Activated naive CD4-positive, alpha-beta T cell treated with anti-CD3 and anti-CD28 coated beads for 36 hours (primary cell): ENCODE measurements at regions of chr2 and their contacts with region 1.

Region 1: DNA sequence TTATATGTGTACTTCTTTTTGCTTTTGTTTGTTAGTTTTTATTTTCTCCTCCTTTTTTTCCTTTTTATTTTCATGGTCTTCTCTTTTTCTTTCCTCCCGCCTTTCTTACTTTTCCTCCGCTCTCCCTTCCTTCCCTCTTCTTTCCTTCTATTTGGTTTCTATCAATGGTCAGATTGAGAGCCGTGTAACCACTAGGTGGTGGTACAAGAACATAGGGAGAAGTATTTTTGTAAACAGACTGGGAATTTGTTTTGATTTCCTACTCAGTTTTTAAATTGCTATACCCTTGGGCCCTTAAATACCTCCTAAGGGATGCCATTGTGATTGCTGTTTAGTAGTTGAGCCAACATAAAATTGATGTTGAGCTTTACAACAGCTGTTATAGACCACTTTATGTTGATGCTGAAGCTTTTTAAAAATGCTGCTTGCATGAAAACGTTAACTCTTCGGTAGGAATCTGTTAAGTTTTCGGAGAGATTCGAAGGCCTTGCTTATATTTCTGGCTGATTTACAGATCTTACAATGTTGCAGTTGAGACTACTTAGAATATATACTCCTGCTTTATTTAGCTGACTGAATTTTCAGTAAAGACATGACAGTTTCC is 124.2 kb downstream of the UBE2E3 start:
- DNase-seq: peak; percentile 35
- H3K4me3 Mint-ChIP-seq: peak overlapping the region; percentile 20
- H3K27ac Mint-ChIP-seq: peak overlapping the region; percentile 29
- H3K4me1 Mint-ChIP-seq: peaks cover 41% of the 10 kb centered on the region
- H3K27me3 Mint-ChIP-seq: no peaks in the 10 kb centered on the region

Region 2: DNA sequence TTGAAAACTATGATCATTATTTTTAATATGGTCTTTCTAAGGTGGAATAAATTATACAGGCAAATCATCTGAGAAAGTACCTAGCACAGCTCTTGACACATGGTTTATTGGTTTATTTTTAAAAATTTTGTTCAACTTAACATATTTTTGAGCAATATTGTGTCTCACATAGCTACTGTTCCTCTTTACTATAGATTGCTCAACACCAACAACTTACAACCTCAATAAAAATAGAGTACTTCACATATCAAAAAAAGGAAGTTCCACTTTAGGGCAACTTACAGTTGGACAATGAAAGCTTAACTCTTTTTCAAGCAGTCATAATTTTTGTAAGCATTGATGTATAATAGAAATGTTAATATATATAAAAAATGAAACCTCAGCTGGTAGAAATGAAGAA is 565.1 kb before region 1 on chr2:
- CTCF ChIA-PET with region 1: no interaction called
- intact Hi-C with region 1: no loop called
- DNase-seq: no peak
- H3K4me3 Mint-ChIP-seq: no peak overlapping the region
- H3K27ac Mint-ChIP-seq: no peak overlapping the region
- H3K4me1 Mint-ChIP-seq: no peaks in the 10 kb centered on the region
- H3K27me3 Mint-ChIP-seq: peaks cover 3% of the 10 kb centered on the region

Region 3: DNA sequence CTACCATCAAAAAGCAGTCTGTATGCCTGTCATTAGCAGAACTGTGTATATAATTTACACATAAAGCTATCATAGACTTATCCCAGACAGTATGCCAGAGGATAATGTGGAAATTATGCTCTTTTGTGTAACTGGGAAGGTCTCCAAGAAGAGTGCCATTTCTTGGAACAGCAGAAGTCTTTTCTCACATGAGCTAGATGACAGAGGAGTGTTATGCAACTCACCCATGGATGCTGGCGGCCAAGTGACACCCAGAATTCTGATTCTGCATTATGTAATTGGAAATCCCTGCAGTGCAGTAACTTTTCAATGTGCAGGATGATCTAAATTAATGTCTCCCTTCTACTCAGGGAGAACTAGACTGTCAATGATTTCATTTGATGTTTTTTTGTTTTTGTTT is 35.8 kb after region 1 on chr2:
- CTCF ChIA-PET with region 1: interaction called, 15 read pairs
- intact Hi-C with region 1: loop called (anchors 1 kb)
- DNase-seq: no peak
- H3K4me3 Mint-ChIP-seq: peak overlapping the region; percentile 68
- H3K27ac Mint-ChIP-seq: peak overlapping the region; percentile 65
- H3K4me1 Mint-ChIP-seq: peaks cover 63% of the 10 kb centered on the region
- H3K27me3 Mint-ChIP-seq: no peaks in the 10 kb centered on the region

Region 4: GRCh38 chr2:181223234-181223633 is 118.6 kb after region 1 on chr2:
- CTCF ChIA-PET with region 1: no interaction called
- intact Hi-C with region 1: loop called (anchors 1 kb)
- DNase-seq: no peak
- H3K4me3 Mint-ChIP-seq: peak overlapping the region; percentile 59
- H3K27ac Mint-ChIP-seq: peak overlapping the region; percentile 80
- H3K4me1 Mint-ChIP-seq: peaks cover 30% of the 10 kb centered on the region
- H3K27me3 Mint-ChIP-seq: no peaks in the 10 kb centered on the region

Region 5: GRCh38 chr2:181319286-181319685 is 214.7 kb after region 1 on chr2:
- CTCF ChIA-PET with region 1: interaction called, 21 read pairs
- intact Hi-C with region 1: no loop called
- DNase-seq: no peak
- H3K4me3 Mint-ChIP-seq: no peak overlapping the region
- H3K27ac Mint-ChIP-seq: no peak overlapping the region
- H3K4me1 Mint-ChIP-seq: peaks cover 36% of the 10 kb centered on the region
- H3K27me3 Mint-ChIP-seq: no peaks in the 10 kb centered on the region

Region 6: DNA sequence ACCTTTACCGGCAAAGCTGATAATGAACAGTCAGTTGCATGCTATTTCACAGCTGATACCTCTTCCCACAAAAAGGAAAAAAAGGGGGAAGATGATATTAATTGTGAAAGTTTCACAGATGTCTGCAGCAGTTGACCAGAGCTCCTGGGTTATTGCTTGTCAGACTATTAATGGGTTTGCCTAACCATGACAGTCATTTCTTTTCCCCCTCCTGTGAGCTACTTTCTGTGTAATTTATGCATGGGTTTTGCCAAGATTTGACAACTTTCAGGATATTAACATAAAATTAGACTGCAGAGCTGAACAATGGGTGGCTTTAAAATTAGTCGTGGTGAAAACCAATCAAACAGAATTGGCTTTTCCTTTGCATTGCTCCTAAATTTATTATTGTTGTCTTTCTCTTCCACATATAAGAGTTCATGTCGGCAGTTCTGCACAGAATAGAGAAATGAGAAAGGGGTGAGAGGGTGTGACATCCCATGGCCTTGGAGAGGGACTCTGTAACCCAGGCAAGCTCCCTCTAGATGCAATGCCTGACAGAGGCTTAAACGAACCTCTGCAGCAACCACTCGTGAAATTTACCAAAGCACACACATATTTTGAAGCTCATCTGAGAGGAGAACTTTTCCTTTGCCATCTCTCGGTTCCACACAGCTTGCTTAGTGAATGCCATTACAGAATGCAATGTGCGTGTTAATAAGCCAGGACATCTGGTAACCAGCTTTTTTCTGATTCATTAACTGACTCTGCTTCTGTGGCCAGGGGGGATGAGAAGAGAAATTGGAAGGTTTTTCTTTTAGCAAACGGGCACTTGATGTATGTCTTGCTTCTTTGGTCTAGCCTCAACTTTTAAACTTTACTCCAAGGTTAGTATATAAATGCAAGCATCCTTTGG is 270.4 kb after region 1 on chr2:
- CTCF ChIA-PET with region 1: no interaction called
- intact Hi-C with region 1: no loop called
- DNase-seq: no peak
- H3K4me3 Mint-ChIP-seq: no peak overlapping the region
- H3K27ac Mint-ChIP-seq: no peak overlapping the region
- H3K4me1 Mint-ChIP-seq: peaks cover 17% of the 10 kb centered on the region
- H3K27me3 Mint-ChIP-seq: no peaks in the 10 kb centered on the region

Region 7: GRCh38 chr2:181573140-181573736 is 468.6 kb after region 1 on chr2:
- CTCF ChIA-PET with region 1: no interaction called
- intact Hi-C with region 1: loop called (anchors 5 kb)
- DNase-seq: no peak
- H3K4me3 Mint-ChIP-seq: no peak overlapping the region
- H3K27ac Mint-ChIP-seq: no peak overlapping the region
- H3K4me1 Mint-ChIP-seq: no peaks in the 10 kb centered on the region
- H3K27me3 Mint-ChIP-seq: peaks cover 4% of the 10 kb centered on the region

Region 8: DNA sequence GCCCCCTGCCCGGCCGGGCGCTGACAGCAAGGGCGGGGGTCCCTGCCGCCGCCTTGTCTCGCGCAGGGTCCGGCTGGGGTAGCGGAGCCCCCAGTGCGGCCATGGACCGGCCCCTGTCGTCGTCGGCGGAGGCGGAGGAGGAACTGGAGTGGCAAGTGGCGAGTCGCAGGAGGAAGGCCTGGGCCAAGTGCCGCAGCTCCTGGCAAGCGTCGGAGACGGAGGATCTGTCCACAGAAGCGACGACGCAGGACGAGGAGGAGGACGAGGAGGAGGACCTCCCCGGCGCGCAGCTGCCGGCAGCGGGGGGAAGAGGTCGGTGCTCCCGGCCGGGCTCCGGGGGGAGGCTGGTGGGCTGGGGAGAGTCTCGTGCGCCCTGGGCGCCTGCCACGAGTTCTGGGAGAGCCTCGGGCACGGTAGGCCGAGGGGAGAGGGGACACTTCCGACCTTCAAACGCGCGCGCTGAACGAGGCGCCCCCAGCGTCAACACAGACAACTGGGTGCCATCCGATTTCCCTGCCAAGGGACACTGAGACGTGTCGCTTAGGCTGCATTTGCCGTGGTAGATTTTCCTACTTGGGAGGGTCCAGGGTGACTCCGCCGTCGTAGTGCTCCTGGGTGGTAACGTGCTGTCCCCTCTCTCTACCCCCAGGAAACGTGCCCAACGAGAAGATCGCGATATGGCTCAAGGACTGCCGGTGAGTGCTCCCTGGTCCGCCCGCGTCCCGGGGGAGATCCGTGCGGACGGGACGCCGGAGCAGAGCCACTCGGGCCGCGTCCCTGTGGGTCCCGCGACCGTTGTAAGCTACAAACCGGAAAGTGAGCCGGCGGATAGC is 787.6 kb after region 1 on chr2:
- CTCF ChIA-PET with region 1: no interaction called
- intact Hi-C with region 1: loop called (anchors 10 kb)
- DNase-seq: peak; percentile 61
- H3K4me3 Mint-ChIP-seq: peak overlapping the region; percentile 94
- H3K27ac Mint-ChIP-seq: peak overlapping the region; percentile 81
- H3K4me1 Mint-ChIP-seq: peaks cover 28% of the 10 kb centered on the region
- H3K27me3 Mint-ChIP-seq: peaks cover 12% of the 10 kb centered on the region